ENCODE measurements at regions of chr3 and their contacts with region 1.

Region 1: DNA sequence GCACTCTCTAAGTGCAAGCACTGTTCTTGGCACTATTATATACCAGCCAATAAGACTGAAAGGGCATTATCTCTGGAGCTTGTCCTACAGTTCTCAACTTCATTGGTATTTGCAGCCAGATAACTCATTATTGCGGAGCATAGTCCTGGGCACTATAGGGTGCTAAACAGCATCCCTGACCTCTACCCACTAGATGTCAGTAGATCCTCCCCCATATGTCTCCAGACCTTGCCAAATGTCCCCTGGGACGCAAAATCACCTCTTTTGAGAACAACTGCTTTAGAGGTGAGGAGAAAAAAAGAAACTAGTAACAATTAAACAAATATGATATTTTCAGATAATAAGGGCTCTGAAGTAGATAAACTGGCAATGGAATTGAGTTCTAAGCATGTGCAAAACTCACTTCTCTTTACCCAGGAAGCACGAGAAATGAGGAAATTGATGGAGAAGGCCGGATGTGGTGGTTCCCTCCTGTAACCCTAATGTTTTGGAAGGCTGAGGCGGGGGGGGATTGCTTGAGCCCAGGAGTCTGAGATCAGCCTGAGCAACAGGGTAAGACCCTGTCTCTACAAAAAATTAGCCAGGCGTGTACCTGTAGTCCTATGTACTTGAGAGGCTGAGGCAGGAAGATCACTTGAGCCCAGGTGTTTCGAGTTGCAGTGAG is 61.4 kb downstream of the FRMD4B start:
- DNase-seq: no peak
- ATAC-seq: peak in 1 of 2 donors; percentile 16

Region 2: GRCh38 chr3:69368129-69368741 is 43.7 kb after region 1 on chr3:
- intact Hi-C with region 1: no loop called
- DNase-seq: no peak
- ATAC-seq: peak in 1 of 2 donors; percentile 11

Region 3: GRCh38 chr3:69425261-69425660 is 100.8 kb after region 1 on chr3:
- intact Hi-C with region 1: loop called in 1 of 2 experiments (anchors 5 kb)
- DNase-seq: no peak
- ATAC-seq: peak; percentile 53 to 69